Panc1 (cell line): ENCODE measurements at regions of chr14 and their contacts with region 1.

Region 1: DNA sequence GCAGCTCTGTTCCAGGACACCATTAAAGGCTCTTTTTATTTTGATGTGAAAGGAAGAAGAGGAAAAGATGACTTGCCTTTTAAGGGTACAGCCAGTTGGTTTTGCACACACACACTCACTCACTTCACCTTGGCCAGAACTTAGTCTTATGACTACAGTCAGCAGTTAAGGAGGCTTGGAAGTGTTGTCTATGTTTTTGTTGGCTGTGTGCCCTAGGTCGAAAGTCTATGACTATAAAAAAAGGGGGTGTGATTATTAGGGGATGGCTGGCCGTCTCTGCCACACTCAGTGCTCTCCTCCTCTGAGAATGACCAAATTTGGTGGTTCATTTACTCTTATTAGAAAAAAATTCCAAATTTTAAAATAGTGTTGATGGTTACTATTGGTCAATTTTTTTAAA is 139.5 kb upstream of the OTX2 start:
- DNase-seq: no peak
- ATAC-seq: no peak
- H3K4me3 ChIP-seq: no peak overlapping the region
- H3K27ac ChIP-seq: no peak overlapping the region
- H3K4me1 ChIP-seq: no peaks in the 10 kb centered on the region
- H3K27me3 ChIP-seq: 0 out of 2 replicates have a peak, but pooled peaks cover 3% of the 10 kb centered on the region
- CTCF ChIP-seq: no peak

Region 2: GRCh38 chr14:57038689-57039088 is 88.9 kb after region 1 on chr14:
- CTCF ChIA-PET with region 1: no interaction called
- POLR2A ChIA-PET with region 1: interaction called, 18 read pairs
- in situ Hi-C with region 1: no loop called
- intact Hi-C with region 1: no loop called
- DNase-seq: no peak
- ATAC-seq: no peak
- H3K4me3 ChIP-seq: no peak overlapping the region
- H3K27ac ChIP-seq: no peak overlapping the region
- H3K4me1 ChIP-seq: no peaks in the 10 kb centered on the region
- H3K27me3 ChIP-seq: no peaks in the 10 kb centered on the region; the same call in 1 of the 2 replicates
- CTCF ChIP-seq: no peak